ENCODE measurements at regions of chr1 and their contacts with region 1.

Region 1: DNA sequence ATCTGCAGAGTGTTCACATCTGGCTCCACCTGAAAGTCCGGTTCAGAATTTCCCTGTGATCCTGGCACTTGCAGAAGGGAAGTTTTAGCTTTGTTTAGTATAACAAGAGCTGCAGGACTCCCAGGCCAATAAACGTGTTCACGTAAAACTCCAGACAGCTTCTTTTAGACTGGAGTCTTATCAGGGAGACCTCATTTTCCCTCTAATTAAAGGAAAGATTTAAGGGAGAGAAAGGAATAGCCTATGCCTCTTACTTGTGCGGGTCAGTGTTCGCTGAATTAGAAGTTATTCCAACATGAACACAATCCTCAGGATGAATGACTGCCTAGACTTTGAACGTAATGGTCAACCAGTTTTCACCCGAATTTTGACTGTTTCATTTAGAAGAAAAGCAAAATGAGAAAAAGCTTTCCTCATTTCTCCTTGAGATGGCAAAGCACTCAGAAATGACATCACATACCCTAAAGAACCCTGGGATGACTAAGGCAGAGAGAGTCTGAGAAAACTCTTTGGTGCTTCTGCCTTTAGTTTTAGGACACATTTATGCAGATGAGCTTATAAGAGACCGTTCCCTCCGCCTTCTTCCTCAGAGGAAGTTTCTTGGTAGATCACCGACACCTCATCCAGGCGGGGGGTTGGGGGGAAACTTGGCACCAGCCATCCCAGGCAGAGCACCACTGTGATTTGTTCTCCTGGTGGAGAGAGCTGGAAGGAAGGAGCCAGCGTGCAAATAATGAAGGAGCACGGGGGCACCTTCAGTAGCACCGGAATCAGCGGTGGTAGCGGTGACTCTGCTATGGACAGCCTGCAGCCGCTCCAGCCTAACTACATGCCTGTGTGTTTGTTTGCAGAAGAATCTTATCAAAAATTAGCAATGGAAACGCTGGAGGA is 202.1 kb upstream of the SGIP1 start:
- DNase-seq: no peak
- CTCF ChIP-seq: no peak

Region 2: DNA sequence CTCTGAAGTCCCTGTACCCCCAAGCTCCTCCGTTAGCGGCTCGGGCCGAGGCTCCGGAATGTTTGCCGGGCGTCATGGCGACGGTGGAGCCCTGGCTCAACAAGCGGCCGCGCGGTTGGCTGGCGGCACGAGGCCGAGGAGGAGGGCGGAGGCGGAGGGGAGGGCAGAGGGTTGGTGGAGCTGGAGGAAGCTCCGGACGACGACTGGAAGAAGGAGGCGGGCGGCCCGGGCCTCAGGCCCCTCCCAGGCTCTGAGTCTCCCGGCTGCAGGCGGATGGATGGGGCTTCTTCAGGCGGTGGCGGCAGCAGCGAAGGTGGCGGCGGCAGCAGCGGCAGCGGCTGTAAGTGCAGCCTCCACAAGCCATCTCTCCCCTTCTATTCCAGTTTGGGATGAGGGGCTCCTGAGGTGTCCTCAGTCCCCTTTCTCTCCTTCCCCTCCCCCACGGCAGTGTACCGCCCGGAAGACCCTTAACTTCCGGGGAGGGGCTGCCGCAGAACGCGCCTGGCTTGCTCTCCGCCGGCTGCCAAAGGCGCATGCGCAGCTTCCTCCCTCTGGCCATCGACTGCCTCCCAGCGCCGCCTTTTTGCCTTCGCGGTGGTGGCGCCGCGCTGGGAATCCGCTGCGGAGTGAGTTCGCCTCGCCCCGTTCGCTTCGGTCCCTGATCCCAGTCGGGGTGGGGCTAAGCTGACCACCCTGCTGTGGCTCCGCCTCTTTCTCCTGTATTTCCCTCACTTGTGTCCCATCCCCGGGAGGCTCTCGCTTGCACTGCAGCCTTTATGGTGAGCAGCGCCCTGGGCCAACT is 593.1 kb after region 1 on chr1 and contains the starts of genes DNAI4 and MIER1:
- in situ Hi-C with region 1: loop called (anchors 25 kb)
- DNase-seq: peak; percentile 99
- CTCF ChIP-seq: peak; percentile 23